ENCODE measurements at regions of chr13 and their contacts with region 1.

Region 1: DNA sequence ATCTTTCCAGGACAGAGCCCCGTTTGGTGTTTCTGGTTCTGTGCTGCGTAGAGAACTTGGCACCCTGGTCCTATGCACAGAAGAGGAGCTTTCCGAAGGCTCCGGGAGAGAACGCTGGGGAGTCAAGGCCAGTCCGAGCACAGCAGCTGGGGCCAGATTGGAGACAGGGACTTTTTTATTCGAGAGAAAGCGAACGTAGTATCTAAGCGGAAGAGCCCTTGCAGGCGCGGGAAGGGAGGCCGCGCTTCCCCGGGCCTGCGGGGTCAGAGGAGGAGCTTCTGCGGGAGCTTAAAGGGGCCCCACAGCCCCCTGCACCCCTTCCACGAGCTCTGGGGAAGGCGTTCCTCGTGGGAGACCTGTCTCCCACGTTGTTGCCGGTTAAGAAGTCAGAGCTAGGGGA is 48.6 kb upstream of the ARHGEF7 start:
- DNase-seq: no peak
- ATAC-seq: no peak
- H3K4me3 ChIP-seq: peak overlapping the region in 1 of 4 donors; percentile 75
- H3K27ac ChIP-seq: peak overlapping the region in 1 of 4 donors; percentile 87
- H3K4me1 ChIP-seq: peaks cover 2 to 16% of the 10 kb centered on the region in 2 donors
- H3K27me3 ChIP-seq: no peaks in the 10 kb centered on the region
- CTCF ChIP-seq: no peak
- POLR2A ChIP-seq: no peak

Region 2: GRCh38 chr13:111122056-111122455 is 55.5 kb after region 1 on chr13:
- in situ Hi-C with region 1: no loop called
- intact Hi-C with region 1: loop called (anchors 2 kb)
- DNase-seq: peak; percentile 51 to 87
- ATAC-seq: peak; percentile 89 to 96
- H3K4me3 ChIP-seq: peak overlapping the region in 2 of 4 donors; percentile 4 to 26
- H3K27ac ChIP-seq: peak overlapping the region; percentile 73 to 82 (median 79)
- H3K4me1 ChIP-seq: peaks cover 2 to 23% of the 10 kb centered on the region in 2 donors
- H3K27me3 ChIP-seq: peaks cover 0 to 1% (median 0%) of the 10 kb centered on the region in 3 donors
- CTCF ChIP-seq: peak in 4 of 5 experiments; percentile 19 to 46 (median 24)
- POLR2A ChIP-seq: peak; percentile 35 to 40

Region 3: DNA sequence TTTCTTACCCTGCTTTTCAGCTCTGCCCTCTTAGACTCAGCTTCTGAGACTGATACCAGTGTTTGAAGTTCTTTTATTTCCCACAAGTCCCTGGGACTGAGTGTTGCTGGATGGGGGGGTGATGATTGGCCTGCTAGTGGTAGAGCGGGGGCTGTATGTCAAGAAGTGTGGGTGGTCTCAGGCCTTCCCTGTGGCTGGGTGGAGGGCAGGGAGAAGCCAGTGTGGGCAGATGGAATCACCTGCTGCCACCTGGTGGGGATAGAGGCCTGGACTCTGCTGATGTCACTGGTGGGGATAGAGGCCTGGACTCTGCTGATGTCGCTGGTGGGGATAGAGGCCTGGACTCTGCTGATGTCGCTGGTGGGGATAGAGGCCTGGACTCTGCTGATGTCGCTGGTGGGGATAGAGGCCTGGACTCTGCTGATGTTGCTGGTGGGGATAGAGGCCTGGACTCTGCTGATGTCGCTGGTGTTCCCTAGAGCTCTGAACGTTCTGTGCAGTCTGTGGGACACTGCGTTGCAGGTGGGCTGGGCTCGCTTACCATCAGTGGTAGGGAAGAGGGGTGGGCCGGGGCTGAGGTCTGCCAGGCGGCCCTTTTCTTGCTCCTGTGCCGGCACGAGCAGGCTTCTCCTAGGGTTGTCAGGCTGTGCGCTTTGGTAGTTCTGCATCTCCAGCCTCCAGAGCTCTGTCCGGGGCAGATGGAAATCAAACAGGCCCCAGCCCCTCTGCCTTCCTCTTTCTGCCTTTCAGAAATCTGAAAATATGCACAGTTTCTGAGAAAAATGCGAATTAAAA is 149.8 kb after region 1 on chr13:
- in situ Hi-C with region 1: loop called in 2 of 4 experiments (anchors 5 to 10 kb)
- intact Hi-C with region 1: loop called (anchors 1 kb)
- DNase-seq: peak; percentile 26 to 73
- ATAC-seq: peak; percentile 53 to 68
- H3K4me3 ChIP-seq: no peak overlapping the region
- H3K27ac ChIP-seq: peak overlapping the region; percentile 81 to 83 (median 82)
- H3K4me1 ChIP-seq: peaks cover 79 to 82% of the 10 kb centered on the region in 2 donors
- H3K27me3 ChIP-seq: no peaks in the 10 kb centered on the region
- CTCF ChIP-seq: peak; percentile 26 to 71 (median 56)
- POLR2A ChIP-seq: no peak

Region 4: DNA sequence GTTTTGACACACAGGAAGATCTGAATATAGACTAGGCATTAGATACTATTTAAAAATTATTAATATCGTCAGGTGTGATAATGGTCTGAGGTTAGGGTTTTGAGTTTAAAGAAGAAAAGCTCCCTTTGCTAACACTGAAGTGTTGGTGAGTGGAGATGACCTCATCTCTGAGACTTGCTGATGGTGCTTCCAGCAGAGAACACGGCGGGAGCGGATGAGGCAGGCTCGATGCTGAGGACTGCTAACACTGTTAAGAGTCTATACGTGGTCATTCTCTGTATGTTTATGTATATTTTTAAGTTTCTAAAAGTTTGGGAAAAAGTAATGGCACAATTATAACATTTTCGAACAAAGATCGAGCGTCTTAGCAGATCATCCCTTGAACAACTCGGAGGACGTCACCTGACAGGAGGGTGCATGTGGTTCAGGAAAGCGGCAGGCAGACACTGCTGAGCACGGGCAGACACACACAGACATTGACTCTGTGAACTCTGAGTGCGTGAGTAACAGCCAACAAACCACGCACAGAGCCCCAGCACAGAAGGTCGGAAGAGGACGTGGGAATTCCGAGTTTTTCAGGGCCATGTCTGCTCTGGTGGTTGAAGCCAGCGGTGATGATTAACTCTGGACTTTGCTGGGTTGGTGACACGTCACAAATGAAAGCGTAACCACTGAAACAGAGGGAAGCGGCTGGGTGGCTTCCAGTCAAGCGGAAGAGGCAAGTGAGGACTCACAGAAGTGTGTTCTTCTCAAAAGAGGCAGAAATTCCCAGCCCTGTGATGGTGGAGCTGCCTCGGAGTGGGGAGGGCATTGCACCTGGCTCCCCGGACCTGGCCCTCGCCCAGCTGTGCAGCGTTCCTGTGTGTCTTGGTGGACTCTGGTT is 162.0 kb after region 1 on chr13:
- in situ Hi-C with region 1: loop called in 1 of 4 experiments (anchors 10 kb)
- intact Hi-C with region 1: no loop called
- DNase-seq: no peak
- ATAC-seq: peak; percentile 56 to 58
- H3K4me3 ChIP-seq: peak overlapping the region in 1 of 4 donors; percentile 10
- H3K27ac ChIP-seq: peak overlapping the region; percentile 33 to 57 (median 50)
- H3K4me1 ChIP-seq: peaks cover 46 to 73% of the 10 kb centered on the region in 2 donors
- H3K27me3 ChIP-seq: no peaks in the 10 kb centered on the region
- CTCF ChIP-seq: no peak
- POLR2A ChIP-seq: no peak

Measured in gastrocnemius medialis (tissue), 4 donors.